ENCODE measurements at regions of chr2 and their contacts with region 1.

Region 1: DNA sequence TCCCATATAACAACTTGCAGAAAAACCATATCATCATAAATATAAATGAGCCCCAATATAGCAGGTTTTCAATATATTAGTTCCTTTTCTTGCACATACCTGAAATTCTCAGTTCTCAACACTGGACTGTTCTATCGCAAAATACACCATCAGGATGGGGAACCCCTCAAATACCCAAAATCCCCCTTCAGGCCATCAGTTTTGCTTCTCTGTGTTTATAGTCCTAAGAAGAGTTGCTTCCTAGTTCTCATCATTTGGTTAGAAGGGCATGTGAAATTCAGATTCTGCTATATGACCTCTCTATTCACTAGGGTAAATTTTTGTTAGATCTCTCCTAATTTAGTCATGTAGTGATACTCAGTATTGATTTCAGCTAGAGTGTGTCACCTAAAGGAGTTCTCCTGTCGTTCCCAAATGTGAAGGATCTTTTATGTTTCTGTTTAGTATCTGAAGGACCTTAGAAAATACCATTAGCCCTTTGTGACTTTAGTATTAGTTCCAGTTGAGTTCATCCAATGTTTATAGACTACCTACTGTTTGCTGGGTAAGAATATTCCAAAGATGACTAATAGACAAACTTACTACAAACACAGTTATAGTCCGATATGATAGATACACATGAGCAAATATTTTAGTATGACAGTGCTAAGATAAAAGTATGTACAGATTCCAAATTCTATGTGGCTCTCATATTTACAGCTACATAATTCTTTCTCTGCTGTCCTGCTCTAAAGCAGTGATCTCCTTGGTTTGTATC is 115.8 kb downstream of the TTC27 start:
- DNase-seq: no peak
- H3K4me3 ChIP-seq: no peak overlapping the region
- H3K27ac ChIP-seq: no peak overlapping the region
- H3K4me1 ChIP-seq: peaks cover 7% of the 10 kb centered on the region
- H3K27me3 ChIP-seq: no peaks in the 10 kb centered on the region
- CTCF ChIP-seq: no peak

Region 2: GRCh38 chr2:31413862-31414550 is 1329.7 kb before region 1 on chr2:
- CTCF ChIA-PET with region 1: no interaction called
- dilution Hi-C with region 1: no loop called
- in situ Hi-C with region 1: no loop called
- intact Hi-C with region 1: no loop called
- DNase-seq: no peak
- H3K4me3 ChIP-seq: peak overlapping the region; percentile 32 to 53 (median 38)
- H3K27ac ChIP-seq: peak overlapping the region; percentile 49
- H3K4me1 ChIP-seq: peaks cover 37% of the 10 kb centered on the region
- H3K27me3 ChIP-seq: no peaks in the 10 kb centered on the region
- CTCF ChIP-seq: peak in 1 of 2 donors; percentile 45

Region 3: DNA sequence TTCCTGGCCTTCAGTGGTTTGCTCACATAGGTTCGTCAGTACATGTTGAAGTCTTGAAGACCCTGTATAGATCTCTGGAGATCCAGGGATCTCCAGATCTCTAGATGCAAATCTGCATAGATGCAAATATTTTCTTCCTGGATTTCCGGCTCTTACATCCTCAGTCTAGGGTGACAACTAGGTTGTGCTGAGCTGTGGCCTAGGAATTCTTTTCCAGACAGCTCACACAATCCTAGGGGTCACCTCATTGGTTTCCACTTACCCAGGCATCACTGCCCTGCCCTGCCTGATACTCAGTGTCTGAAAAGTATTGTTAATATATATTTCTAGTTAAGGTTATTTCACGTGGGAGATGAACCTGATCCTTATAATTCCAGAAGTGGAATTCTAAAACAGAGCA is 220.9 kb before region 1 on chr2:
- CTCF ChIA-PET with region 1: no interaction called
- dilution Hi-C with region 1: no loop called
- in situ Hi-C with region 1: no loop called
- intact Hi-C with region 1: no loop called
- DNase-seq: no peak
- H3K4me3 ChIP-seq: no peak overlapping the region
- H3K27ac ChIP-seq: no peak overlapping the region
- H3K4me1 ChIP-seq: no peaks in the 10 kb centered on the region
- H3K27me3 ChIP-seq: no peaks in the 10 kb centered on the region
- CTCF ChIP-seq: no peak

Region 4: GRCh38 chr2:32627814-32628579 is 115.7 kb before region 1 on chr2 and contains the start of gene TTC27:
- CTCF ChIA-PET with region 1: no interaction called
- dilution Hi-C with region 1: no loop called
- in situ Hi-C with region 1: no loop called
- intact Hi-C with region 1: loop called (anchors 5 kb)
- DNase-seq: peak; percentile 93
- H3K4me3 ChIP-seq: peak within 1 kb of the TSS; percentile 78 to 96 (median 90)
- H3K27ac ChIP-seq: peak within 1 kb of the TSS; percentile 79
- H3K4me1 ChIP-seq: peaks cover 5% of the 10 kb centered on the region
- H3K27me3 ChIP-seq: no peaks in the 10 kb centered on the region
- CTCF ChIP-seq: no peak
- total RNA-seq, gene TTC27: 18.5 to 26.5 TPM

Region 5: DNA sequence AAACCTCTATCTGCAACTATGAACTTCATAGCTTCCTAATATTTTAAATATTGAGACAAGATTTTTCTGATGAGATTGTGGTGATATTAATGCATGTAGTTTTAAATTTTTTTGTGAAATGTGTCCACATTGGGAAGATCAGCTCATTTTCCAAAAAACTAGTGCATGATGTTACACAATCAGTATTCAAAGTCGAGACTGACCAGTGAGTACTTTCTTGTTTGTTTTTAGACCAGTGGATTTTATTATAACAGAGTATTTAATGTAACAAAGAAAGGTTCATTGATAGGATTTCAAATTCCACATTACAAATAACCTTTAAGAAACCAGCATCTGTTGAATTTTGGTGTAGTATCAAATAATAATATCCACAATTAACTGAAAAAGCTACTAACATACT is 16.5 kb before region 1 on chr2:
- CTCF ChIA-PET with region 1: no interaction called
- dilution Hi-C with region 1: no loop called
- in situ Hi-C with region 1: no loop called
- intact Hi-C with region 1: no loop called
- DNase-seq: no peak
- H3K4me3 ChIP-seq: no peak overlapping the region
- H3K27ac ChIP-seq: no peak overlapping the region
- H3K4me1 ChIP-seq: no peaks in the 10 kb centered on the region
- H3K27me3 ChIP-seq: no peaks in the 10 kb centered on the region
- CTCF ChIP-seq: no peak

Measured in mammary epithelial cell (primary cell).